GM10248 (cell line): ENCODE measurements at regions of chr10 and their contacts with region 1.

Region 1: DNA sequence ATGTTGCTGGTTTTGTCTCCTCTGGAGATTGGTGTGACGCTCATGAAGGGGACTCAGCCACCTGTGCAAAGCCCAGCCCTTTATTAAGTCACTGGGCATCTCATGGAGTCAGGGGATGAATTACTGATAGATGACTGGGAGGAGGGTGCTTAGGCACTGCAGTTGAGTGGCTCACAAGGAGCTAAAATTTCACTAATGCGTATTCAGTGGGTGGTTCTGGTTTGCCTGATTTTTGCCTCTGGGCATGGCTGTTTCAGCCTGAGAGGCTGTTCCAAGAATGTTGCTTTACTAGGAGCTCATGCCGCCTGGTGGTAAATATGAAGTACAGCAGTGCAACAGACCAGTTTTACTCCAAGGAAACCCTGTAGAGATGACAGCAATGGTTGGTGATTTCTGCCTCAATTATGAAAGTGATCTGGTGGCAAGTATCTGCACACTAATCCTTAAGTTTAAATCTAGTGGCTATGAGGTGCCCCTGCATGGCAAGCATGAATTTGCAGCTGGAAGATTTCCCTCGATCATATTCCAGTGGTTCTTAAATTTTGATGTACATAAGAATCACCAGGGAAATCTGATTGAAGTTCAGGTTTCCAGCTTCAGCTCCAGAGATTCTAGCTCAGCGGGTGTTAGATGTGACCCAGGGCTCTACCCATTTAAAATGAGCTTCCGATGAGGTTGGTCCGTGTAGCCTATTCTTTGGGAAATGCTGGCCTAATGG is 19.9 kb downstream of the ACTA2 start:
- DNase-seq: peak; percentile 44
- CTCF ChIP-seq: peak; percentile 89

Region 2: DNA sequence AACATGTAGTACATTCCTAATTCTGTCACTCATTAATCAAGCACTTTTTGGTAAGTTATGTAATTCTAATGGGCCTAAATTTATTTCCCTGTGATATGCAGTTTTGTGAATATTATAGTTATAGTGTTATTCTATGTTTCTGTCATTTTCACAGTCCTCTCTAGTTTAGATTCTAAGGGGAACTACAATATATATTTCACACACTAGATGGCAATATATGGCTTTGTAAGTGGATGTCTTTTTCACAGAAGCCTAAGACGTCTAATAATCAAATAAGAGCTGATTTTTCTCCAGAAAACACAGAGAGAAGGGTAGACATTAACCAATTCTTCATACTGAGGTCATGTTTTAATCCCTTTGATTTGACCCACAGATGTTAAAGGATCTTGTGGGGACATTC is 367.6 kb before region 1 on chr10:
- CTCF ChIA-PET with region 1: interaction called, 90 read pairs
- POLR2A ChIA-PET with region 1: no interaction called
- DNase-seq: peak; percentile 24
- CTCF ChIP-seq: peak; percentile 40

Region 3: GRCh38 chr10:88835096-88835909 is 97.4 kb before region 1 on chr10:
- CTCF ChIA-PET with region 1: interaction called, 471 read pairs
- POLR2A ChIA-PET with region 1: no interaction called
- DNase-seq: peak; percentile 55
- CTCF ChIP-seq: peak; percentile 89

Region 4: DNA sequence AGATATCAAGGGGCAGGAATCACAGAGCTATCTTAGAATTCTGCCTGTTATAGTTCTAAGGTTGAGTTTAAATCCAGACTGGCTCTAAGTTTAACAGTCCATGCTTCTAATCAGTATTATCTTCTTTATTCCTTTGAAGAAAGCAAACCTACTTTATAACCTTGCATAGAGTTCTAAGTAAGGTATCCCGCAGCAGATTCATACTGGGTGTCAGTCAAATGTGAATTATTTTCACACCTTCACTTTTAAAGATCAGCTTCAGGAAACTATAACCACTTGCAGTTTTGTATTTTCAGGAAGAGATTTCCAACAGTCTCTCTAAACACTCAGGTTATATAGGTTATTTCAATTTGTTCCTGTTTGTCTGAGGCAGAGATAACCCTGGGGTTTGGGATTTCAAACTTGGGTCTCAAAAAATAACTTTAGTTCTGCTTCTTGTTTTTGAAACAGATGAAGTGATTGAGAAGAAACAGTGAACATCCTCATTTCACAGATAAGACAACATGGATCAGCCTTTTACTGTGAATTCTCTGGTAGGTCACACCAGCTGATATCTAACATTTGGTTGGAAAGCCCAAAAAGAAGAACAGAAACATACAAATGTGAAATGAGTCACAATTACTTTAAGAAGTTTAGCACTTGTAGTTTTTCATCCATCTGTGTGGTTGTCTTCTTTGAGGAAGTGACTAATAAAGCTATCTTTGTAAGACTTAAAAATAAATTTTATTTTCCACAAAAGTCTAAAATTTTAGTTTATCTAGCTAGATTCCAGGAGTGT is 31.3 kb before region 1 on chr10:
- CTCF ChIA-PET with region 1: interaction called, 69 read pairs
- POLR2A ChIA-PET with region 1: no interaction called
- DNase-seq: peak; percentile 44
- CTCF ChIP-seq: no peak

Region 5: DNA sequence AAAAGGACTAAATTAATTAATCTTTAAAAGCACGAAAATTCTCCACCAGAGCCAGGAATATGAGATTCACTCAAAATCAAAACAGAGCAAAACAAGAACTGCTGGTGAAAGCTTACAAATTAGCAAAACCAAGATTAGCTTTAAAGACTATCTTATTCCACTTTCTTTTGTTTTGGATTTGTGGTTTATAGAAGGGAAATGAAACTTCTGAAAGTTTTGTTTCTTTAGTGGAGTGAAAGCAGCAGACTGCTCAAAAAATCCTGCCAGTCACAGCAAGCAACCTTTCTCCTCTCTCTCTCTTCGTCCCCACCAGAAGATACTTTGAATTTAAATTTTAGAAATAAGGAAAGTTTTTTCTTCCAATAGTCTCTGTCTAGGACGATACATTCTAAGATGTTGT is 12.1 kb after region 1 on chr10:
- CTCF ChIA-PET with region 1: interaction called, 11 read pairs
- POLR2A ChIA-PET with region 1: no interaction called
- DNase-seq: peak; percentile 35
- CTCF ChIP-seq: no peak

Region 6: DNA sequence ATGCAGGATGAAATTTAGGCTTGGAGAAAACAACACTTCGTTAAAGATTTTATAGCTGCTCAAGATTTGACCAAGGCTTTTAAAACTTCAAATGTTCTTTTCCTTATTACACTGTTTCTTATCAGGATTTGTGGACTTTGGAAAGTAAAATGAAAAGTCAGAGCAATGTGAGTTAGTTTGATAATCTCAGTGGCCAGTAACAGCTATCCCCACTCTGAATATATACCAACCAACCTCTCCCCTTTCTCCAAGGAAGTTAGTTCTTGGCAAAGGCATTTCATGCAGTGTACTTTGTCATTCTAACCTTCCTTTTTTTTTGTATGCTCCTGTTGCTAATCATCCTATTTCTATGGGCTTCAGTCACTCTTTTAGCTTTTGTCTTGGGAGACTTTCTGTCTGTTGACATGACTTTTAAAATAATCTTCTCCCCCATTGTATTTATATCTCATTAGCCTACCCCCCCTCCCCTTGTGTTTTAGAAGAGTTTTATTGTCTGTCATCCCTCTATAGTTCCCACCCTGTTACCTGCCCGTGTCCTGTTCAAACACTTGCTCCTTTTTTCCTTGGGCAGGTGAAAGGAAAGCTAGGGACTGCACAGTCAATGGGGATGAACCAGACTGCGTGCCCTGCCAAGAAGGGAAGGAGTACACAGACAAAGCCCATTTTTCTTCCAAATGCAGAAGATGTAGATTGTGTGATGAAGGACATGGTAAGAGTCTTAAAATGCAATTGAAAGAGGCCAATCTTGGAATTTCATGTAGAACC is 74.6 kb after region 1 on chr10:
- CTCF ChIA-PET with region 1: interaction called, 13 read pairs
- POLR2A ChIA-PET with region 1: no interaction called
- DNase-seq: no peak
- CTCF ChIP-seq: no peak